ENCODE measurements at regions of chr7 and their contacts with region 1.

Region 1: GRCh38 chr7:13797545-13797944 is 191.9 kb downstream of the ETV1 start:
- DNase-seq: peak; percentile 30
- H3K4me3 ChIP-seq: no peak overlapping the region
- H3K27ac ChIP-seq: no peak overlapping the region
- H3K4me1 ChIP-seq: peaks cover 5% of the 10 kb centered on the region
- H3K27me3 ChIP-seq: no peaks in the 10 kb centered on the region
- CTCF ChIP-seq: no peak

Region 2: DNA sequence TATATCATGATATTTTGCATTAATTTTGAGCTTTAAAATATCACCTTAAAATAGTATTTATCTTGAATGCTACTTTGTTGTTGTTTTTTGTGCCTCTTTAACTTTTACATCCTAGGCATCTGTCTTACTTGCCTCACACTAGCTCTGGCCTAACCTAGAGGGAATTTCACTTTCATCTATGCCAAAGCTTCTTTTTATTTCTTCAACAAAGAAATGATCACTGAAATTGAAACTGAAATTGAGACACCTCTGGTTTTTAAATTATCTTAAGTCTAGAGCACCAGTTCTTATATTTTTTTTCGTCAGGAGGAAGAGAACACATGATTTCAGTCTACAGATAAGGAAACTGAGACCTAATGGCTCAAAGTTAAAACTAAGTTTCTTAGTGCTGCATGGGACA is 1230.5 kb before region 1 on chr7:
- CTCF ChIA-PET with region 1: interaction called, 14 read pairs
- POLR2A ChIA-PET with region 1: no interaction called
- intact Hi-C with region 1: no loop called
- DNase-seq: no peak
- H3K4me3 ChIP-seq: no peak overlapping the region
- H3K27ac ChIP-seq: no peak overlapping the region
- H3K4me1 ChIP-seq: no peaks in the 10 kb centered on the region
- H3K27me3 ChIP-seq: peaks cover 25% of the 10 kb centered on the region
- CTCF ChIP-seq: no peak

Region 3: GRCh38 chr7:13656330-13656729 is 141.2 kb before region 1 on chr7:
- CTCF ChIA-PET with region 1: no interaction called
- POLR2A ChIA-PET with region 1: interaction called, 11 read pairs
- intact Hi-C with region 1: no loop called
- DNase-seq: no peak
- H3K4me3 ChIP-seq: no peak overlapping the region
- H3K27ac ChIP-seq: no peak overlapping the region
- H3K4me1 ChIP-seq: no peaks in the 10 kb centered on the region
- H3K27me3 ChIP-seq: no peaks in the 10 kb centered on the region
- CTCF ChIP-seq: no peak

Region 4: GRCh38 chr7:14115701-14116100 is 318.2 kb after region 1 on chr7:
- CTCF ChIA-PET with region 1: no interaction called
- POLR2A ChIA-PET with region 1: no interaction called
- intact Hi-C with region 1: no loop called
- DNase-seq: no peak
- H3K4me3 ChIP-seq: no peak overlapping the region
- H3K27ac ChIP-seq: no peak overlapping the region
- H3K4me1 ChIP-seq: no peaks in the 10 kb centered on the region
- H3K27me3 ChIP-seq: no peaks in the 10 kb centered on the region
- CTCF ChIP-seq: no peak

Measured in A673 (cell line).